Activated CD8-positive, alpha-beta T cell treated with anti-CD3 and anti-CD28 coated beads for 36 hours (primary cell): ENCODE measurements at regions of chr2 and their contacts with region 1.

Region 1: GRCh38 chr2:112254466-112255239 is at the start of gene ZC3H8:
- DNase-seq: peak; percentile 96
- ATAC-seq: peak; percentile 94
- H3K4me3 Mint-ChIP-seq: no peak within 1 kb of the TSS
- H3K27ac Mint-ChIP-seq: peak within 1 kb of the TSS; percentile 93
- H3K4me1 Mint-ChIP-seq: peaks cover 31% of the 10 kb centered on the region
- H3K27me3 Mint-ChIP-seq: no peaks in the 10 kb centered on the region
- CTCF ChIP-seq: no peak
- total RNA-seq, gene ZC3H8: 16.7 to 22.1 TPM

Region 2: DNA sequence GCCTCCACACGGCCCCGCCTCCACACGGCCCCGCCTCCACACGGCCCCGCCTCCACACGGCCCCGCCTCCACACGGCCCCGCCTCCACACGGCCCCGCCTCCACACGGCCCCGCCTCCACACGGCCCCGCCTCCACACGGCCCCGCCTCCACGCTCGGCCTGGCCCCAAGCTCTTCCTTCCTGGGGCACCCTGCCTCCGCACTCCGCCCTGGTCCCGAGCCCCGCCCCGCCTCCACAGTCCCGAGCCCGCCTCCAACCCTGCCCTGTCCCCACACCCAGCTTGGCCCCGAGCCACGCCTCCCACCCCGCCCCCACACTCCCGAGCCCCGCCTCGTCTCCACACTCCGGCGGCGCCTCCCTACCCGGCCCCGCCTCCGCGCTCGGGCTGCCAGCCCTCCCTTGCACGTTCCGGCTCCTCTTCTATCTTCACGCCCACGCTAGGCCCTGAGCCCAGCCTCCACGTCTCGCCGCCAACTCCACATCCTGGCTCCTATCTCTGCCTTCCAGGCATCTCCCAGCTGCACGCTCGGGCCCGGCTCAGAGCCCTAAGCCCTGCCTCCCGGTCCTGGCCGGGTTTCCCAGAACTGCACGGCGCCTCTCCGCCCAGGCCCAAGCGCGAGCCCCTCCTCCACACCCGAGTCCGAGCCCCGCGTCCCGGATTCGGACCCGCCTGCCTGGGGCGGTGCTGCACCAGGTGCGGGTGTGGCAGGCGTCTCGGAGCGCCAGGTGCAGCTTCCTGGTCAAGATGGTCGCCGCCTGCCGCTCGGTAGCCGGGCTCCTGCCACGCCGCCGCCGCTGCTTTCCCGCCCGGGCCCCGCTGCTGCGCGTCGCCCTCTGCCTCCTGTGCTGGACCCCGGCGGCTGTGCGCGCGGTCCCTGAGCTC is 199.6 kb before region 1 on chr2 and contains the start of gene TMEM87B:
- CTCF ChIA-PET with region 1: no interaction called
- POLR2A ChIA-PET with region 1: interaction called, 5 read pairs
- intact Hi-C with region 1: loop called (anchors 10 kb)
- DNase-seq: peak; percentile 98
- ATAC-seq: peak; percentile 76
- H3K4me3 Mint-ChIP-seq: peak within 1 kb of the TSS; percentile 81
- H3K27ac Mint-ChIP-seq: peak within 1 kb of the TSS; percentile 96
- H3K4me1 Mint-ChIP-seq: peaks cover 29% of the 10 kb centered on the region
- H3K27me3 Mint-ChIP-seq: no peaks in the 10 kb centered on the region
- CTCF ChIP-seq: no peak
- total RNA-seq, gene TMEM87B: 11.4 to 12.2 TPM

Region 3: DNA sequence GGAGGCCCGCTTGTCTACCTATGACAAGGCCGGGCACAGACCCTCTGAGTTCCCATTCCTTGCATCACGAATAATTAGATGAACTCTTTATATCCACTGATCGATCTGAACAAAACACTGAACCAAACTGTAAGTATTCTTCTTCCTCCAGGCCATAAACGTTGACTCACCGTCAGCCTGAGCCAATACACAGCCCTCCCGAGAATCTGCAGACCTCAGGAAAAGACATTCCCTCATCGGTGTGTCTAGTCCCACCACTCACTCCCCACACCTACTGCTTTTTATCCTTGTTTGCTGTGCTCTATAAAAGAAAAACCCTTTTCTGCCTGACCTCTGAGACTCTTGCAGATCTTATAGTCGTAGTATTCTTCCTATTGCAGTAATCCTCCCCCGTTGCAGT is 158.6 kb before region 1 on chr2:
- CTCF ChIA-PET with region 1: no interaction called
- POLR2A ChIA-PET with region 1: no interaction called
- intact Hi-C with region 1: no loop called
- DNase-seq: no peak
- ATAC-seq: no peak
- H3K4me3 Mint-ChIP-seq: no peak overlapping the region
- H3K27ac Mint-ChIP-seq: peak overlapping the region; percentile 4
- H3K4me1 Mint-ChIP-seq: peaks cover 15% of the 10 kb centered on the region
- H3K27me3 Mint-ChIP-seq: no peaks in the 10 kb centered on the region
- CTCF ChIP-seq: no peak

Region 4: DNA sequence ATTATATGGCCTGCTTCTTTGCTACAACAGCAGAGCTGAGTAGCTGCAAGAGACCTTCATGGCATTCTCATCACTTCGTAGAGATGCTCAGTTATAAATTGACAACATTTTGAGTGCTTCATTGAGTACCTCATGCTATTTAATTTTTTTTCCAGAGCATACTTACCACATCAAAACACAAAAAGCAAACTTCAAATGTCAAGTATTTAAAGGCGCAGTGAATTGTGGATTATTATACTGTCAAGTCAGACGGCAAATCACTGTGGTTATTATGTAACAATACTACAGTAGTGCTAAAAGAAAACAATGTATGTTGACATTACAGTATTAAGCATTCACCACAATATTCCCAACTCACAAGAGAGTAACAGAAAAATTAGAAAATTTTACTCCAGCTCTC is 12.3 kb before region 1 on chr2:
- CTCF ChIA-PET with region 1: interaction called, 23 read pairs
- POLR2A ChIA-PET with region 1: interaction called, 9 read pairs
- intact Hi-C with region 1: no loop called
- DNase-seq: no peak
- ATAC-seq: no peak
- H3K4me3 Mint-ChIP-seq: no peak overlapping the region
- H3K27ac Mint-ChIP-seq: no peak overlapping the region
- H3K4me1 Mint-ChIP-seq: peaks cover 42% of the 10 kb centered on the region
- H3K27me3 Mint-ChIP-seq: no peaks in the 10 kb centered on the region
- CTCF ChIP-seq: no peak

Region 5: GRCh38 chr2:112433932-112434730 is 179.5 kb after region 1 on chr2:
- CTCF ChIA-PET with region 1: no interaction called
- POLR2A ChIA-PET with region 1: no interaction called
- intact Hi-C with region 1: loop called (anchors 5 kb)
- DNase-seq: peak; percentile 4
- ATAC-seq: no peak
- H3K4me3 Mint-ChIP-seq: no peak overlapping the region
- H3K27ac Mint-ChIP-seq: no peak overlapping the region
- H3K4me1 Mint-ChIP-seq: peaks cover 13% of the 10 kb centered on the region
- H3K27me3 Mint-ChIP-seq: peaks cover 3% of the 10 kb centered on the region
- CTCF ChIP-seq: no peak